ENCODE measurements at regions of chr1 and their contacts with region 1.

Region 1: GRCh38 chr1:180863158-180863775 is 49.4 kb upstream of the KIAA1614 start:
- DNase-seq: peak; percentile 42
- ATAC-seq: no peak
- H3K4me3 Mint-ChIP-seq: no peak overlapping the region
- H3K27ac Mint-ChIP-seq: no peak overlapping the region
- H3K4me1 Mint-ChIP-seq: no peaks in the 10 kb centered on the region
- H3K27me3 Mint-ChIP-seq: no peaks in the 10 kb centered on the region

Region 2: GRCh38 chr1:180515864-180516388 is 347.3 kb before region 1 on chr1:
- CTCF ChIA-PET with region 1: interaction called, 142 read pairs
- POLR2A ChIA-PET with region 1: no interaction called
- intact Hi-C with region 1: loop called (anchors 1 to 5 kb)
- DNase-seq: peak; percentile 76
- ATAC-seq: peak; percentile 100
- H3K4me3 Mint-ChIP-seq: no peak overlapping the region
- H3K27ac Mint-ChIP-seq: no peak overlapping the region
- H3K4me1 Mint-ChIP-seq: no peaks in the 10 kb centered on the region
- H3K27me3 Mint-ChIP-seq: peaks cover 4% of the 10 kb centered on the region

Region 3: GRCh38 chr1:180533266-180533987 is 329.8 kb before region 1 on chr1:
- CTCF ChIA-PET with region 1: interaction called, 148 read pairs
- POLR2A ChIA-PET with region 1: no interaction called
- intact Hi-C with region 1: loop called (anchors 5 kb)
- DNase-seq: peak; percentile 86
- ATAC-seq: peak; percentile 81
- H3K4me3 Mint-ChIP-seq: no peak overlapping the region
- H3K27ac Mint-ChIP-seq: no peak overlapping the region
- H3K4me1 Mint-ChIP-seq: no peaks in the 10 kb centered on the region
- H3K27me3 Mint-ChIP-seq: peaks cover 4% of the 10 kb centered on the region

Region 4: GRCh38 chr1:180778782-180779398 is 84.4 kb before region 1 on chr1:
- CTCF ChIA-PET with region 1: interaction called, 5 read pairs
- POLR2A ChIA-PET with region 1: no interaction called
- intact Hi-C with region 1: loop called in 1 of 2 experiments (anchors 5 kb)
- DNase-seq: peak; percentile 18
- ATAC-seq: no peak
- H3K4me3 Mint-ChIP-seq: no peak overlapping the region
- H3K27ac Mint-ChIP-seq: no peak overlapping the region
- H3K4me1 Mint-ChIP-seq: peaks cover 2% of the 10 kb centered on the region
- H3K27me3 Mint-ChIP-seq: no peaks in the 10 kb centered on the region

Region 5: GRCh38 chr1:180851995-180852887 is 11.0 kb before region 1 on chr1:
- CTCF ChIA-PET with region 1: interaction called, 19 read pairs
- POLR2A ChIA-PET with region 1: no interaction called
- intact Hi-C with region 1: no loop called
- DNase-seq: no peak
- ATAC-seq: no peak
- H3K4me3 Mint-ChIP-seq: no peak overlapping the region
- H3K27ac Mint-ChIP-seq: no peak overlapping the region
- H3K4me1 Mint-ChIP-seq: peaks cover 20% of the 10 kb centered on the region
- H3K27me3 Mint-ChIP-seq: no peaks in the 10 kb centered on the region

Region 6: DNA sequence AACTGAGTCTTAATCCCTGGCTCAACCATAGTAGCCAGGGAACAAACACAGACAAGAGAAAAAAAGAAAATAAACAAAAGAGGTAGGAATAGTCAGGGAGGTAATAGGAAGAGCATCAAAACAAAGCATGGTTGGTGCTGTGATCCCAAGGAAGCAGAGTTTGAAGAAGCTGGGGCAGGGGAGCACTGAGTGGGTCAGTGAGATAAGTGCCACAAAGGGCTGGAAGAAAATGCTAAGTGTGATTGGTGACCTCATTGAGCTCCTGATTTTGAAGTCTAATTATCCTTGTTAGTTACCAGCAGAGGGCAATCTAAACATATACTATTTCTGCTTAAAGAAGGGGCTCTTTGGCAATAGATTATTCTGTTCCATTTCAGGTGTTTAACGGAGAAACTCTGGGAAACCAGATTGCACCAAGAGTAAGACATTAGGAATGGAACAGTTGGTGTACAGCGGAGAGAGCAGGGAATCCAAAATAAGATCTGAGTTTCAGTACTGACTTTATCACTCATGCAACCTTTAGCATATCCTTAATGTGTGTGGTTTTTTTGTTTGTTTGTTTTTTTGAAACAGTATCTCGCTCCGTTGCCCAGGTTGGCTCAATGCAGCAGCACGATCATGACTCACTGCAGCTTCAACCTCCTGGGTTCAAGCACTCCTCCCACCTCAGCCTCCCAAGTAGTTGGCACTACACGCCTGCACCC is 18.7 kb after region 1 on chr1:
- CTCF ChIA-PET with region 1: interaction called, 14 read pairs
- POLR2A ChIA-PET with region 1: no interaction called
- intact Hi-C with region 1: no loop called
- DNase-seq: no peak
- ATAC-seq: peak; percentile 66
- H3K4me3 Mint-ChIP-seq: no peak overlapping the region
- H3K27ac Mint-ChIP-seq: no peak overlapping the region
- H3K4me1 Mint-ChIP-seq: no peaks in the 10 kb centered on the region
- H3K27me3 Mint-ChIP-seq: no peaks in the 10 kb centered on the region

Measured in activated CD4-positive, alpha-beta T cell treated with anti-CD3 and anti-CD28 coated beads for 36 hours (primary cell).